Spleen (tissue), 13 donors: ENCODE measurements at regions of chr18 and their contacts with region 1.

Region 1: GRCh38 chr18:26764628-26765027 is 100.9 kb downstream of the AQP4 start:
- DNase-seq: no peak
- H3K4me3 ChIP-seq: no peak overlapping the region
- H3K27ac ChIP-seq: no peak overlapping the region
- H3K4me1 ChIP-seq: no peaks in the 10 kb centered on the region
- H3K27me3 ChIP-seq: no peaks in the 10 kb centered on the region
- CTCF ChIP-seq: no peak
- POLR2A ChIP-seq: no peak

Region 2: GRCh38 chr18:26656944-26657536 is 107.6 kb before region 1 on chr18:
- intact Hi-C with region 1: loop called (anchors 10 kb)
- DNase-seq: peak; percentile 91
- H3K4me3 ChIP-seq: peak overlapping the region; percentile 19 to 76 (median 58)
- H3K27ac ChIP-seq: peak overlapping the region; percentile 6 to 87 (median 83)
- H3K4me1 ChIP-seq: peaks cover 0 to 35% (median 30%) of the 10 kb centered on the region in 6 donors
- H3K27me3 ChIP-seq: peaks cover 0 to 85% (median 27%) of the 10 kb centered on the region in 7 donors
- CTCF ChIP-seq: peak in 6 of 11 experiments; percentile 22 to 55 (median 48)
- POLR2A ChIP-seq: peak in 1 of 3 donors; percentile 53

Region 3: GRCh38 chr18:26863122-26863879 is 98.7 kb after region 1 on chr18:
- intact Hi-C with region 1: no loop called
- DNase-seq: no peak
- H3K4me3 ChIP-seq: peak overlapping the region in 5 of 8 donors; percentile 15 to 64 (median 33)
- H3K27ac ChIP-seq: no peak overlapping the region
- H3K4me1 ChIP-seq: peaks cover 0 to 14% (median 0%) of the 10 kb centered on the region in 6 donors
- H3K27me3 ChIP-seq: peaks cover 0 to 46% (median 11%) of the 10 kb centered on the region in 7 donors
- CTCF ChIP-seq: no peak
- POLR2A ChIP-seq: no peak

Region 4: GRCh38 chr18:26893996-26894395 is 129.4 kb after region 1 on chr18:
- intact Hi-C with region 1: no loop called
- DNase-seq: no peak
- H3K4me3 ChIP-seq: no peak overlapping the region
- H3K27ac ChIP-seq: no peak overlapping the region
- H3K4me1 ChIP-seq: no peaks in the 10 kb centered on the region
- H3K27me3 ChIP-seq: no peaks in the 10 kb centered on the region
- CTCF ChIP-seq: no peak
- POLR2A ChIP-seq: no peak

Region 5: GRCh38 chr18:26978812-26979341 is 214.2 kb after region 1 on chr18:
- intact Hi-C with region 1: no loop called
- DNase-seq: no peak
- H3K4me3 ChIP-seq: no peak overlapping the region
- H3K27ac ChIP-seq: peak overlapping the region in 2 of 8 donors; percentile 7 to 45
- H3K4me1 ChIP-seq: peaks cover 0 to 11% (median 0%) of the 10 kb centered on the region in 6 donors
- H3K27me3 ChIP-seq: no peaks in the 10 kb centered on the region
- CTCF ChIP-seq: no peak
- POLR2A ChIP-seq: no peak